Mammary epithelial cell (primary cell): ENCODE measurements at regions of chr17 and their contacts with region 1.

Region 1: GRCh38 chr17:80504686-80505413 is 28.4 kb upstream of the NPTX1 start:
- DNase-seq: no peak
- H3K4me3 ChIP-seq: no peak overlapping the region
- H3K27ac ChIP-seq: no peak overlapping the region
- H3K4me1 ChIP-seq: peaks cover 20% of the 10 kb centered on the region
- H3K27me3 ChIP-seq: no peaks in the 10 kb centered on the region
- CTCF ChIP-seq: no peak

Region 2: DNA sequence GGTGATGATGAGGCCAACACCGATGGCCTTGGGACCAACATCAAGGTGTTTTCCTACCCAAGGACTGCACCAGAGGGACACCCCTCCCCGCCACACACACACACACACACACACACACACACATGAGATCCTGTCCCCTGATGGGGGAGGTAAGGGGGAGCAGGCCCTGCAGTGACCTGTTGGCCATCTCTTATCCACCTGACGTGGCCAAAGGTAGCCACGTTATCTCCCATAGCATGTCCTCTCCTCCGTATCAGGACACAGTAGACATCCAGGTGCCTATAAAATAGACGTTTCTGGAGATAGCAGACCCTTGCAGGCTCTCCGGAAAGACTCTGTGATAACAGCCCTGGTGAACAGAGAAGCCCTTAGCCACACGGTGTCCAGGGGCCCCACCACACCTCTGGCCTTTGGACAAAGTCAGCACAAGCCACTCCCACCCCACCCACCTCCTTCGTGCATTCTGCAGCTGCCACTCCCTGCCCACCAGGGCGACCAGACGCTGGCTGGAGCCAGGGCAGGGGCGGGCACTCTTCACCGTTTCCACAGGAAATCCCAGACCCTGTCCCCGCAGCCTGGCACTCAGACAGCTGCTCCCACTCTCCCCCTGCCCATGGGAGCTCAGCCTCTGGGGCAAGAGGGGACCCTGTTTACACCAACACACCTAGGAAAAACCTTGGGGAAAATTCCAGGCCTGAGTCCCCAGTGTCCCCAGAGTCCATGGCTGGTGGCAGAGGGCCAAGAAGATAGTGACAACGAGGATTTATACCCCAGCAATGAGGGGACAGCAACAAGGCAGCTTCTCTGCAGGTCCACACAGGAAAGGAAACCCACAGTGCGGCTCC is 789.5 kb before region 1 on chr17:
- CTCF ChIA-PET with region 1: no interaction called
- dilution Hi-C with region 1: no loop called
- in situ Hi-C with region 1: no loop called
- intact Hi-C with region 1: loop called (anchors 10 kb)
- DNase-seq: no peak
- H3K4me3 ChIP-seq: no peak overlapping the region
- H3K27ac ChIP-seq: no peak overlapping the region
- H3K4me1 ChIP-seq: no peaks in the 10 kb centered on the region
- H3K27me3 ChIP-seq: no peaks in the 10 kb centered on the region
- CTCF ChIP-seq: no peak

Region 3: GRCh38 chr17:80544655-80545498 is 40.0 kb after region 1 on chr17 and contains the start of gene RPTOR:
- CTCF ChIA-PET with region 1: no interaction called
- dilution Hi-C with region 1: no loop called
- in situ Hi-C with region 1: no loop called
- intact Hi-C with region 1: loop called (anchors 1 kb)
- DNase-seq: peak; percentile 80
- H3K4me3 ChIP-seq: peak within 1 kb of the TSS; percentile 73 to 94 (median 85)
- H3K27ac ChIP-seq: peak within 1 kb of the TSS; percentile 86
- H3K4me1 ChIP-seq: peaks cover 21% of the 10 kb centered on the region
- H3K27me3 ChIP-seq: no peaks in the 10 kb centered on the region
- CTCF ChIP-seq: no peak
- total RNA-seq, gene RPTOR: 35.8 to 36.7 TPM

Region 4: DNA sequence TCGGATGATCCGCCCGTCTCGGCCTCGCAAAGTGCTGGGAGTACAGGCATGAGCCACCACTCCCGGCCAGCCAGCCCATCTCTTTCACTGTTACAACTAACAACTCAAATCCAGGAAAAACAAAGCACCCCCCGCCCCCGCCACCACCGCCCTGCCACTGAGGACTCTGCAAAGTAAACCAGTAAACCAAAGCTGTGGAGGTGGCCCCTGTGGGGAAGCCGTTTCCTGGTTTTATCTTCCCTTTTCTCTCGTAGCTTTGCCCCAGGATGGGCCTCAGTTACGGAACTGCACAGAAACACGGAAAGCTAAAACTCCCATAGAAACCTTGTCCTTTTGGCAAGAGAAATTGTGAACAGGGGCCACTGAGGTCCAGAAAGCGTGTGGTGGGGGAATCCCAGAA is 504.3 kb after region 1 on chr17:
- CTCF ChIA-PET with region 1: no interaction called
- dilution Hi-C with region 1: no loop called
- in situ Hi-C with region 1: no loop called
- intact Hi-C with region 1: no loop called
- DNase-seq: no peak
- H3K4me3 ChIP-seq: no peak overlapping the region
- H3K27ac ChIP-seq: no peak overlapping the region
- H3K4me1 ChIP-seq: peaks cover 3% of the 10 kb centered on the region
- H3K27me3 ChIP-seq: peaks cover 7% of the 10 kb centered on the region
- CTCF ChIP-seq: no peak